GM10248 (cell line): ENCODE measurements at regions of chr1 and their contacts with region 1.

Region 1: GRCh38 chr1:203638950-203639349 is 12.3 kb downstream of the ATP2B4 start:
- DNase-seq: no peak
- CTCF ChIP-seq: no peak

Region 2: GRCh38 chr1:203652724-203653461 is 13.9 kb after region 1 on chr1:
- CTCF ChIA-PET with region 1: interaction called, 12 read pairs
- POLR2A ChIA-PET with region 1: interaction called, 4 read pairs
- DNase-seq: no peak
- CTCF ChIP-seq: no peak